ENCODE measurements at regions of chr11 and their contacts with region 1.

Region 1: GRCh38 chr11:126607374-126607773 is 251.9 kb downstream of the ST3GAL4 start:
- DNase-seq: peak in 2 of 3 donors; percentile 23 to 75
- ATAC-seq: peak; percentile 72 to 80
- H3K4me3 ChIP-seq: no peak overlapping the region
- H3K27ac ChIP-seq: no peak overlapping the region
- H3K4me1 ChIP-seq: no peaks in the 10 kb centered on the region
- H3K27me3 ChIP-seq: no peaks in the 10 kb centered on the region

Region 2: GRCh38 chr11:126739499-126740145 is 132.2 kb after region 1 on chr11:
- intact Hi-C with region 1: no loop called
- DNase-seq: no peak
- ATAC-seq: no peak
- H3K4me3 ChIP-seq: no peak overlapping the region
- H3K27ac ChIP-seq: no peak overlapping the region
- H3K4me1 ChIP-seq: no peaks in the 10 kb centered on the region
- H3K27me3 ChIP-seq: no peaks in the 10 kb centered on the region

Region 3: DNA sequence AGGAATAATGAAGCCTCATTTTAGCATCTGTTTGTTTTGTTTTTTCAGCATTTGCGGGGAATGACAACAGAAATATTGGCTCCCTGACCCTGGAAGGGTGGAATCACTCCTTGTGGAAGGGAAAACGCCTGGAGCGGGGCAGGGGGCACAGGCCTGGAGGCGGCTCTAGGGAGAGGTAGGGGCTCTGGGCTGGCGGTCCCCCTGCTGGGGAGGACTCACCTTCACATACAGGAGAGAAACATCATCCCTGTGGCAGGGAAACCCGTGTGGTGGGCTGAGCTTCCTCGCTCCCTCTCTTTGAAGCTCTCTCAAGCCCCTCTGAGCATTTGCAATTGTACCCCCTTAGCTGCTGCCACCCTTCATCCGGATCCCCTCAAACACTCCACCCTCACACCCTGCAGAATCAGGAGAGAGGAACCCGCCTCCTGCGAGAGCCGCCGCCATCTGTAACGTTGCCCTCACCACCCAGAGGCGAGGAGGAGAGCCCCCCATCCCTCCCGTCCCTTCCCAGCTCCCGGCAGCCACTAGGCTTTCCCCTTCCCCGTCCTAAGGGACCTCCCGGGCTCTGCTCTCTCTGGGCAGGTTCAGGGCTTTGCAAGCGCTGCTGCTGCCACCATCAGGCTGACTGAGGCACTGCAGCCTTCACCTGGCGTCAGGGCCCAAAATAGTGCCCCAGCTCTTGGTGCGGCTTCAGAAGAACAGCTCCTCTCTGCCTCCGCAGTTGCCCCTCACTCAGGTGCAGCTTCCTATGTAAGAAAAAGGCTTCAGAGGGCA is 382.8 kb after region 1 on chr11:
- intact Hi-C with region 1: loop called in 2 of 4 experiments (anchors 5 kb)
- DNase-seq: peak; percentile 74 to 90 (median 87)
- ATAC-seq: peak; percentile 85 to 87
- H3K4me3 ChIP-seq: no peak overlapping the region
- H3K27ac ChIP-seq: no peak overlapping the region
- H3K4me1 ChIP-seq: peaks cover 3% of the 10 kb centered on the region
- H3K27me3 ChIP-seq: no peaks in the 10 kb centered on the region